Activated naive CD4-positive, alpha-beta T cell treated with anti-CD3 and anti-CD28 coated beads for 36 hours (primary cell): ENCODE measurements at regions of chr1 and their contacts with region 1.

Region 1: GRCh38 chr1:203326830-203327683 is 21.7 kb downstream of the BTG2 start:
- DNase-seq: peak; percentile 96
- H3K4me3 Mint-ChIP-seq: peak overlapping the region; percentile 76
- H3K27ac Mint-ChIP-seq: peak overlapping the region; percentile 90
- H3K4me1 Mint-ChIP-seq: peaks cover 53% of the 10 kb centered on the region
- H3K27me3 Mint-ChIP-seq: no peaks in the 10 kb centered on the region

Region 2: DNA sequence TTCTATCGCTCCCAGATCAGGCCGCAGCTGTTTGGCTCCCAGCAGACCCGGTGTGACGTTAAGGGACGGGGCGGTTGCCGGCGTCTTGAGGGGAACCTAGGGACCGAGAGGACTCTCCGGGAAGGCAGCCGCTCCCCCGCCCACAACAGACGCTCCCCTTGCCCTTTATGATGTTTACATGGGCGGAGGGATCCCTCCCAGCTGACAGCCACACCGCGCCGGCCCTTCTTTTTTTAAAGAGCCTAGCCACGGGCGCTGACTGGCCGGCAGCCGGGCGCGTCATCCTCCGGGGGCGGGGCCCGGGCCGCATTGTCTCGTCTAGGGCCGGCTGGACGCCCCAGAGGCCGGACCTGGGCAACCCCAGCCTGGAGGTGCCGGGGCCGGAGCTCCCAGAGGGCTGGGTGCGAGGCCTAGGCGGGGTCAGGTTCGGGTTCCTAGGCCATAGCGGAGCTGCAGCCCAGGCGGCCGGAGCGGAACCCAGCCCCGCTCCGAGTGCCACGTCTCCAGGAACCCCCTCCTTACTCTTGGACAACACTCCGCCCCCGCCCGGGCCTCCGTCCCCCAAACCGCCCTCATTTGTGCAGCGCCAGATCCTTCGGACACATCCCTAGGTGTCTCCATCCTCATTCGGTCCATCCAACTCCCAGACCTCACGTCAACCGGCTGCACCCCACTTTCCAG is 516.3 kb before region 1 on chr1 and contains the start of gene PCAT6:
- CTCF ChIA-PET with region 1: no interaction called
- intact Hi-C with region 1: loop called (anchors 10 kb)
- DNase-seq: peak; percentile 90
- H3K4me3 Mint-ChIP-seq: peak within 1 kb of the TSS; percentile 74
- H3K27ac Mint-ChIP-seq: no peak within 1 kb of the TSS
- H3K4me1 Mint-ChIP-seq: peaks cover 31% of the 10 kb centered on the region
- H3K27me3 Mint-ChIP-seq: no peaks in the 10 kb centered on the region
- total RNA-seq, gene PCAT6: 0.37 to 0.43 TPM

Region 3: DNA sequence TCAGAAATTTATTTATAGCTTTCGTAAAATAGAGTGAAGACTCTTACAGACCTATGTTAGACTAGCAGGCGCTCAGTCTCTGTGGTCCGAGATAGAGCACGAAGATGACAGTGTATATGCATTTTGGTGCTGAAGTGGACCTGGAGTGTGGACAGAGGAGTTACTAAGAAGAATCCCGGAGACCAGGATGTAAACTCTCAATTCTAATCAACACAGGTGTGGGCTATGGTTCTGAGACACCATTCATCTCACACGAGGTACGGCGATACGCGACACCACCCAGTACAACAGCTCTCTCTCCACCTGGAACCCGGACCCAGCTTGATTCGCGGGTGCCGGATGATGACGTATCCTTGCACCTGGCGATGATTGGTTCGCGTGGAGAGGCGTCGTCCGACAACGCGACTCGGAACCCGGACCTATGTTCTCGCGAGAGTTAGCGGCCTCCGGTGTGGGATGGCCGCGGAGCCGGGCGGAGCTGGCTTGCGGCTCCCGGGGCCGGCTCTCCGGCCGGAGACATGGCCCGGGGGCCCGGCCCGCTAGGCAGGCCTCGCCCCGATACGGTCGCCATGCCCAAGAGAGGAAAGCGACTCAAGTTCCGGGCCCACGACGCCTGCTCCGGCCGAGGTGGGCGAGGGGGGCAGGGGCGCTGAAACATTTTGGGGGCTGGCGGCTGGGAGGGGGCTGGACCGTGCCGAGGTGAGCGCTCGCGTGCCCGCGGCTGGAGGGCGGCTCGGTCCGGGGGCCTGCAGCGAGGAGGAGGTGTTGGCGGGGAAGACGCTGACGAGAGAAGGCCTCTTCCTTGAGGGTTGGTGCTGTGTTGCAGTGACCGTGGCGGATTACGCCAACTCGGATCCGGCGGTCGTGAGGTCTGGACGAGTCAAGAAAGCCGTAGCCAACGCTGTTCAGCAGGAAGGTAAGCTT is 319.8 kb before region 1 on chr1 and contains the start of gene TMEM183A:
- CTCF ChIA-PET with region 1: interaction called, 6 read pairs
- intact Hi-C with region 1: loop called (anchors 5 kb)
- DNase-seq: peak; percentile 98
- H3K4me3 Mint-ChIP-seq: peak within 1 kb of the TSS; percentile 79
- H3K27ac Mint-ChIP-seq: peak within 1 kb of the TSS; percentile 93
- H3K4me1 Mint-ChIP-seq: peaks cover 27% of the 10 kb centered on the region
- H3K27me3 Mint-ChIP-seq: no peaks in the 10 kb centered on the region
- total RNA-seq, gene TMEM183A: 80.3 to 90.6 TPM

Region 4: GRCh38 chr1:203273206-203273868 is 53.7 kb before region 1 on chr1:
- CTCF ChIA-PET with region 1: interaction called, 686 read pairs
- intact Hi-C with region 1: loop called (anchors 1 kb)
- DNase-seq: peak; percentile 96
- H3K4me3 Mint-ChIP-seq: peak overlapping the region; percentile 72
- H3K27ac Mint-ChIP-seq: peak overlapping the region; percentile 83
- H3K4me1 Mint-ChIP-seq: peaks cover 58% of the 10 kb centered on the region
- H3K27me3 Mint-ChIP-seq: no peaks in the 10 kb centered on the region

Region 5: GRCh38 chr1:203304919-203305808 is 21.9 kb before region 1 on chr1 and contains the start of gene BTG2:
- CTCF ChIA-PET with region 1: interaction called, 135 read pairs
- intact Hi-C with region 1: loop called (anchors 1 kb)
- DNase-seq: peak; percentile 96
- H3K4me3 Mint-ChIP-seq: peak within 1 kb of the TSS; percentile 97
- H3K27ac Mint-ChIP-seq: peak within 1 kb of the TSS; percentile 99
- H3K4me1 Mint-ChIP-seq: peaks cover 56% of the 10 kb centered on the region
- H3K27me3 Mint-ChIP-seq: no peaks in the 10 kb centered on the region
- total RNA-seq, gene BTG2: 106 to 109 TPM